Endothelial cell of umbilical vein (primary cell): ENCODE measurements at regions of chr1 and their contacts with region 1.

Region 1: GRCh38 chr1:221741711-221742554 is at the start of gene DUSP10:
- DNase-seq: peak; percentile 100
- H3K4me3 ChIP-seq: peak within 1 kb of the TSS; percentile 39 to 84 (median 64)
- H3K27ac ChIP-seq: peak within 1 kb of the TSS; percentile 94
- H3K4me1 ChIP-seq: peaks cover 13% of the 10 kb centered on the region
- H3K27me3 ChIP-seq: peaks cover 7 to 13% of the 10 kb centered on the region in 2 experiments
- CTCF ChIP-seq: no peak
- POLR2A ChIP-seq: no peak
- total RNA-seq, gene DUSP10: 1.6 and 1.9 TPM in 2 replicates

Region 2: DNA sequence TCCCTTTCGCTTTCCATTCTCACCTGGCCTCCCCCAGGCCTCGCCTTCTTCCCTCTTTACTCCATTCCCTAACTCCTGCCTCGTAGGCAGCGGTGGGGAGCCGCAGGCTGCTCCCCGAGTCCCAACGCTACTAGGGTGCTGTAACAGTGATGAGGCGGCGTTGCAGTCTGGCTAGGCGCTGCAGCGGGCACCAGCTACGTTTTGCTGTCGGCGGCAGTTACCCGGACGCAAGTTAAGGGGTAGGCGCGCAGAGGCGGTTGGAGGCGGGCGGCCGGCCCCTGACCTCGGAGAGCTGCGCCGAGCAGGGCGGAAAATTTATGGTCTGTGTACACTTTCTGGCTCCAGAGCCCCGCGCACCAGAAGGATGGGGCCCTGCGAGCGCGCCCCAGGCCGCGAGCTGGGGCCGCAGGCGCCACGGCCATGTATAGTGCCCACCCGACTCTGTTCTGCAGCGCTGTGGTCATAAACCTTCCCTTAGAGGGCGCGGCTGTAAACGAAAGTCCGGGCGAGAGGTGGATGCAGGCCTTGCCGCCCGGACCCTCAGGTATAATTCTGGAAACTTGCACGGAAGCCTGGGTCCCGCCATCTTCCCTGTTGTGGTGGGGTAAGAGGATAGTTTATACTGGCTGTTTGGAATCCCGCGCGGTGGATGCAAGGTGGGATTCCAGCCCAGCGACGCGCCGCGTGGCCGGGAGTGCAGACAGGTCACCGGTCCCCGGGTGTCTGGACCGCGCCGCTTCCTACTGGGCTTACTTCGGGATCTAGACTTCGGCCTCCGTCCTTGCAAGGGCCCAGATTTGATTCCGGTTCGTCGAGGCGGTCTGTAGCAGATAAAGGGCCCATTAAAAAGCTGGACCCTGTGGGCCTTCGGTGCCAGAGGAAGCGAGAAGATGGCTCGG is 847.7 kb before region 1 on chr1:
- CTCF ChIA-PET with region 1: no interaction called
- POLR2A ChIA-PET with region 1: no interaction called
- dilution Hi-C with region 1: no loop called
- intact Hi-C with region 1: loop called (anchors 5 kb)
- DNase-seq: no peak
- H3K4me3 ChIP-seq: peak overlapping the region; percentile 22 to 44 (median 39)
- H3K27ac ChIP-seq: no peak overlapping the region
- H3K4me1 ChIP-seq: peaks cover 15% of the 10 kb centered on the region
- H3K27me3 ChIP-seq: peaks cover 72 to 73% of the 10 kb centered on the region in 2 experiments
- CTCF ChIP-seq: no peak
- POLR2A ChIP-seq: no peak

Region 3: GRCh38 chr1:221204055-221204833 is 537.7 kb before region 1 on chr1:
- CTCF ChIA-PET with region 1: no interaction called
- POLR2A ChIA-PET with region 1: no interaction called
- dilution Hi-C with region 1: no loop called
- intact Hi-C with region 1: no loop called
- DNase-seq: no peak
- H3K4me3 ChIP-seq: no peak overlapping the region
- H3K27ac ChIP-seq: no peak overlapping the region
- H3K4me1 ChIP-seq: no peaks in the 10 kb centered on the region
- H3K27me3 ChIP-seq: peaks cover 0 to 1% of the 10 kb centered on the region in 2 experiments
- CTCF ChIP-seq: no peak
- POLR2A ChIP-seq: no peak

Region 4: DNA sequence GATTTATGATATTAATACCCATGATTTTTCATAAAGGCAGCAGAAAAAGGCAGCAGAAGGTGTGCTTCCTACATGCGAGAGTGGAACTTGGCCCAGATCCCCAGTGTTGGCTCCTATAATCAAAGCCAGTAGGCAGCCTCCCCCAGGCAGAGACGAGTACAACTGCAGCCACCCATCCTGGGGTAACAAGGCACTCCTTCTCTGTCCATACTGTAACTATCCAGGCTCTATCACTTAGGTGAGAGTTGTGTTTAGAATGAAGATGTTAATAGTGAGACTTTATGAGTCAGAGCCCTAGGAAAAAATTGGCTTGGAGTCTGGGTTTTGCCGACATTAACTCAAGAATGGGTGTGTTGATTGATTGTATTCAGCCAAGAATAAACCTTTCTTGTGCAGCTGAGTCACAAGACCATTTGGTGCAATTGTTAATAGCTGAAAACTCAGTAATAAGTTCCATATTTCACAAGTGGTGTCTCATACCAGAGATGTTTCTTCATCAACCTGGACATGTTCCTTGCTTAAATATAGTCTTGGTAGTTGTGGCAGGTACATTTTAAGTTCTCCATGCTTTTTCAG is 322.3 kb before region 1 on chr1:
- CTCF ChIA-PET with region 1: no interaction called
- POLR2A ChIA-PET with region 1: no interaction called
- dilution Hi-C with region 1: no loop called
- intact Hi-C with region 1: loop called (anchors 5 kb)
- DNase-seq: peak; percentile 60
- H3K4me3 ChIP-seq: no peak overlapping the region
- H3K27ac ChIP-seq: no peak overlapping the region
- H3K4me1 ChIP-seq: peaks cover 24% of the 10 kb centered on the region
- H3K27me3 ChIP-seq: no peaks in the 10 kb centered on the region
- CTCF ChIP-seq: no peak
- POLR2A ChIP-seq: no peak

Region 5: DNA sequence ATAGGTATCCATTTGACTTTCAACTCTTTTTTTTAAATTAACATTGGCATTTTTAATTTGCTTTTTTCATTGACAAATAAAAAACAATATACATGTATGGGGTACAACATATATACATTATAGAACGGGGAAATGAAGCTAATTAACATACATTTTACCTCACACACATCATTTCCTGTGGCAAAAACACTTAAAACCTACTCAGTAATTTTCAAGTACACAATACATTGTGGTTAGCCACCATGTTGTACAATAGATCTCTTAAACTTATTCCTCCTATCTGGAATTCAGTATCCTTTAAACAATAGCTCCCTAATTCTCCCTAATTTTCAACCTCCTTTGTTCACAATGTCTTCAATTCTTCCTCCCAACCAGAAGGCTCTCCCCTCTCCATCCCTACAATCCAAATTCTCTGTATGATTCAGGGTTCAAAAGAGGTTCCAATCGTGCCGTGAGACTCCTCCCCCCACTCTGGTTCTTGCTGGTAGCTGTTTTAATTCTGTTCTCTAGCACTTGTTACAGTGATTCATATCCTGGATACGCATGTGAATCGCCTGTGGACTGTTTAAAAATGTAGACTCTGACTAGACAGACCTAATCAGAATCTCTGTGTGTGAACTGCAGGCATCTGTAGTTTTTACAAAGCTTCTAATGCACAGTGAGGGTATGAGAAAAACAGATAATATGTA is 87.5 kb after region 1 on chr1:
- CTCF ChIA-PET with region 1: interaction called, 4 read pairs
- POLR2A ChIA-PET with region 1: interaction called, 4 read pairs
- dilution Hi-C with region 1: no loop called
- intact Hi-C with region 1: loop called (anchors 1 kb)
- DNase-seq: peak; percentile 93
- H3K4me3 ChIP-seq: no peak overlapping the region
- H3K27ac ChIP-seq: peak overlapping the region; percentile 63
- H3K4me1 ChIP-seq: peaks cover 58% of the 10 kb centered on the region
- H3K27me3 ChIP-seq: no peaks in the 10 kb centered on the region
- CTCF ChIP-seq: no peak
- POLR2A ChIP-seq: no peak

Region 6: DNA sequence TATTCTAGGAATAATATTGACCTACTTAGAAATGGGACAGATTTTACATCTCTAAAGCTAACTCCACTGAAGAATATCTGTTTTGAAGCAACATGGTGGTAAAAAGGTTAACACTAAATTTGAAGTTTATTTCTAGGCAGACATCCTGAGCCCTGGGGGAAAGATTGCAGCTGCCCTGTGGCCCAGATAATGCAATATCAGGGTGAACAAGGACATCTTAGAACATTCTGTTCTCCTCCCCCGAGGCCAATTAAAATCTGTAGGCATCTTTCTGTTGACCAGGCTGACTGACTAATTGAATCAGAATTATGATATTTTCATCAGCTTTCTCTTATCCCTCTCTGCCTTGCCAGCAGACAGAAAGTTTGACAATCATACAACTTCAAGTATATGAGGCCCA is 149.8 kb after region 1 on chr1:
- CTCF ChIA-PET with region 1: interaction called, 11 read pairs
- POLR2A ChIA-PET with region 1: no interaction called
- dilution Hi-C with region 1: no loop called
- intact Hi-C with region 1: no loop called
- DNase-seq: no peak
- H3K4me3 ChIP-seq: no peak overlapping the region
- H3K27ac ChIP-seq: no peak overlapping the region
- H3K4me1 ChIP-seq: no peaks in the 10 kb centered on the region
- H3K27me3 ChIP-seq: peaks cover 2 to 6% of the 10 kb centered on the region in 2 experiments
- CTCF ChIP-seq: no peak
- POLR2A ChIP-seq: no peak

Region 7: GRCh38 chr1:222171005-222171404 is 429.1 kb after region 1 on chr1:
- CTCF ChIA-PET with region 1: no interaction called
- POLR2A ChIA-PET with region 1: no interaction called
- dilution Hi-C with region 1: no loop called
- intact Hi-C with region 1: loop called (anchors 5 kb)
- DNase-seq: no peak
- H3K4me3 ChIP-seq: no peak overlapping the region
- H3K27ac ChIP-seq: no peak overlapping the region
- H3K4me1 ChIP-seq: no peaks in the 10 kb centered on the region
- H3K27me3 ChIP-seq: no peaks in the 10 kb centered on the region
- CTCF ChIP-seq: peak; percentile 17 to 31
- POLR2A ChIP-seq: no peak